OCI-LY7 (cell line): ENCODE measurements at regions of chr5 and their contacts with region 1.

Region 1: GRCh38 chr5:170278611-170279452 is 18.7 kb downstream of the LCP2 start:
- DNase-seq: peak; percentile 79
- H3K4me3 ChIP-seq: peak overlapping the region; percentile 38
- H3K27ac ChIP-seq: peak overlapping the region; percentile 60
- H3K4me1 ChIP-seq: peaks cover 28% of the 10 kb centered on the region
- CTCF ChIP-seq: no peak

Region 2: GRCh38 chr5:170293273-170293672 is 14.4 kb after region 1 on chr5:
- CTCF ChIA-PET with region 1: interaction called, 3 read pairs
- POLR2A ChIA-PET with region 1: interaction called, 4 read pairs
- intact Hi-C with region 1: loop called (anchors 2 kb)
- DNase-seq: no peak
- H3K4me3 ChIP-seq: no peak overlapping the region
- H3K27ac ChIP-seq: no peak overlapping the region
- H3K4me1 ChIP-seq: peaks cover 11% of the 10 kb centered on the region
- CTCF ChIP-seq: no peak

Region 3: GRCh38 chr5:170330568-170331054 is 51.8 kb after region 1 on chr5:
- CTCF ChIA-PET with region 1: interaction called, 3 read pairs
- POLR2A ChIA-PET with region 1: interaction called, 4 read pairs
- intact Hi-C with region 1: loop called (anchors 2 kb)
- DNase-seq: no peak
- H3K4me3 ChIP-seq: peak overlapping the region; percentile 34
- H3K27ac ChIP-seq: peak overlapping the region; percentile 20
- H3K4me1 ChIP-seq: peaks cover 47% of the 10 kb centered on the region
- CTCF ChIP-seq: no peak

Region 4: DNA sequence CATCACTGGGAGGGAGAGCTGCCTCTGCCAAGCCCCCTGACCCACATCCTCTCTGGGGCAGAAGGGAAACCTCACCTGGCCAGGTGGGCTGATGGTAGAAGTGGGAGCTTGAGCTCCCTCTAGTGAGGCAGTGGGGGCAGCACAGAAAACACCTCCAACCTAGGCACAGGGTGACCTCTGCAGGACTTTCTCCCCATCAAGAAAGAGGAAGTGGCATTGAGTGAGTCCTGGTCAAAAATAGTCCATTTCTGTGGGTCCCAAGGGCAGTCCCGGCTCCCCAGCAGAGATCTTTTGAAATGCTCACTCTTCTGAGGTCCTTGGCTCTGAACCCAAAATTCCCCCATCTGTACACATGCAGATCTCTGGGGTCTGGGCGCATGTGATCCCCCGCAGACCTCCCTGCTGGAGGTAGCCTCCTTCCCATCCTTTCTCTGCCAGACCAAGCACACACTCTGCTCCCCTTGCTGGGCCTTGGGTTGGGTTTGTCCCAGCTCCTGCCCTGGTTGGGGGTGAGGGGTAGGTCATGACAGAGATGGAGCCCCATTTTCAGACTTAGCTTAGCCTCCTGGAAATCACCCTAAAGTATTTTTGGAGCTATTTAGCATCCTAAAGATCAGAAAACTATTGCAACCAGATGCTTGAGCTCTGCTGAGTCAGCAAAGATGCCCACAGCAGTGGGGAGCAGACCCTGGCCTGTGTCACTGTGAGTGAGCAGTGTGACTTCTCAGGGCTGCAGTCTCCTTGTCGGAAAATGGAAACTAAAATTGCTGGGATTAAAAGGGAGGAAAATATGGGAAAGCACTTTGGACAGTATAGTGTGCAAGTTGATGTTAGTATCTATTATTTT is 60.3 kb after region 1 on chr5:
- CTCF ChIA-PET with region 1: interaction called, 11 read pairs
- POLR2A ChIA-PET with region 1: interaction called, 5 read pairs
- intact Hi-C with region 1: loop called (anchors 1 kb)
- DNase-seq: peak; percentile 64
- H3K4me3 ChIP-seq: no peak overlapping the region
- H3K27ac ChIP-seq: no peak overlapping the region
- H3K4me1 ChIP-seq: no peaks in the 10 kb centered on the region
- CTCF ChIP-seq: peak; percentile 81